Calu3 (cell line): ENCODE measurements at regions of chr16 and their contacts with region 1.

Region 1: DNA sequence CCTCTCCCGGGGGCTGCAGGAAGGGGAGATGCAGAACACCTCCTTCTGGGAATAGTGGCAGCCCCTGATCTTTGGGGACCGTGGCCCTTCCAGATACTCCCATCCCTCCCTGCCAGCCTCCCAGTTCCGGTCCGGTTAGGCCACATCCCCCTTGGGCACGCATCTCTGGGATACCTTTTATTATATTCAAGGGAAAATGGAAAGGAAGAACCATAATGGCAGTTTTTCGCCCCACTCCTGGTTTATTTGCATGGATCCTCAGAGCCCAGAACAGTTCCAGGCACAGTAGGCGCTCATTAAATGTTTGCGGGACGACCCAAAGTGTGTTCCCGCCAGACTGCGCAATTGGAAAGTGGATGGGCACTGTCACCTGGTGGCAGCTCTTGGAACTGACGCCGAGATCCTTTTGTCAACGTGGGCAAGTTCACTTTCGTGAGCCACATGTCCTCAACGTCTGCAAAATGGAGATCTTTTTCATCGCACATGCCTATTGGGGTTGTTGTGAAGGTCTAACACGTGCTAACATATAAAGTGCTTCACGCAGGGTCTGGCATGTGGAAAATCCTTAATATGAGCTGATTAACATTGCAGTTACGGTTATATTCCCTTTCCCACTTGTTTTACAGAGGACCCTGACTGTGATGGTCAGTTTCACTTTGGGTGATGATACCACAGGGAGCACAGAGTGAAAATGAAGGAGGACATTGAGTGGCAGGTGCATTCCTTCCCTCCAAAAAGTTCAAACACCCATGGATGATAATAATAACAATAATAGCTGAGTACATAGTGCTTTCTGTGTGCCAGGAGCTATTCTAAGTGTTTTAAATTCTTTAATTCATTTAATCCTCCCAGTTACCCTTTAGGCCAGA is 1.7 kb upstream of the GPRC5B start:
- DNase-seq: peak; percentile 86
- H3K4me3 Mint-ChIP-seq: peak overlapping the region; percentile 90
- H3K27ac Mint-ChIP-seq: no peak overlapping the region
- H3K4me1 Mint-ChIP-seq: peaks cover 8% of the 10 kb centered on the region
- H3K27me3 Mint-ChIP-seq: no peaks in the 10 kb centered on the region
- CTCF ChIP-seq: peak; percentile 100

Region 2: GRCh38 chr16:19555162-19555937 is 331.0 kb before region 1 on chr16 and contains the start of gene VPS35L:
- CTCF ChIA-PET with region 1: no interaction called
- intact Hi-C with region 1: loop called (anchors 1 kb)
- DNase-seq: peak; percentile 94
- H3K4me3 Mint-ChIP-seq: peak within 1 kb of the TSS; percentile 71
- H3K27ac Mint-ChIP-seq: peak within 1 kb of the TSS; percentile 66
- H3K4me1 Mint-ChIP-seq: no peaks in the 10 kb centered on the region
- H3K27me3 Mint-ChIP-seq: no peaks in the 10 kb centered on the region
- CTCF ChIP-seq: peak; percentile 51
- total RNA-seq, gene VPS35L: 14.2 and 25.4 TPM in 2 replicates

Region 3: GRCh38 chr16:19583665-19584300 is 302.5 kb before region 1 on chr16:
- CTCF ChIA-PET with region 1: interaction called, 10 read pairs
- intact Hi-C with region 1: loop called (anchors 5 kb)
- DNase-seq: peak; percentile 61
- H3K4me3 Mint-ChIP-seq: no peak overlapping the region
- H3K27ac Mint-ChIP-seq: no peak overlapping the region
- H3K4me1 Mint-ChIP-seq: peaks cover 8% of the 10 kb centered on the region
- H3K27me3 Mint-ChIP-seq: no peaks in the 10 kb centered on the region
- CTCF ChIP-seq: peak; percentile 91

Region 4: DNA sequence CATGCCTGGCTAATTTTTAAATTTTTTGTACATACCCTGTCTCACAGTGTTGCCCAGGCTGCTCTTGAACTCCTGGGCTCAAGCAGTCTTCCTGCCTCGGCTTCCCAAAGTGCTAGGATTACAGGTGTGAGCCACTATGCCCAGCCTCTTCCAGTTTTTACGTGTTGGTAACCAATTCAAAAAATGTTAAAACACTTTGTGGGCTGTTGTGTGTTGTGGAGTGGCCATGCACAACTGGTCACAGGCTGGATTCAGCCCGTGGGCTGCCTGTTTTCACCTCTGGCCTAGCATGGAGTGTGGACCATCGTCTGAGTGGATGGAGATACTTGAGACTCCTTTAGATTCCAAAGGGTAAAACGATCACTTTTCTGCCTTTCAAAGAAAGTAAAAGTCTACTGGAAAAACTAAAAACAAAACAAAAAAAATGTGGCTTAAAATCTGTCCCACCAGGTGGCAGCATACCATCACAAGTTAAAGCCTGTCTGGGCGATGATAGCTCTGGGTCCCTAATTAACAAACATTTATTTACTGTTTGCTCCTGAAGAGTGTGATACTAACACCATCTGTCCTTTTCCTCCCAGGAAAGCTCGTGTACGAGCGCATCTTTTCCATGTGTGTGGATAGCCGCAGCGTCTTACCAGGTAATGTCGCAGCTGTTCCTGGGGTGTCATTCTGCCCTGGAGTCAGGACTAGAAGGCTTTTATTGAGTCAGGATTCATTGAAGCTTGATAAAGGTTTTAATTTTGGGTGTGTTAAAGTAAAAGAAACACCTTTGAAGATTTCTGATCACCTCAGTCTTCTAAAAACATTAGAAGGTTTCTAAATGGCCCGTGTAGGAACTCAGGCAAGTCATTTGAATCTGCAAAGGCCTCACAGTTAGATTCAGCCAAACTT is 285.0 kb before region 1 on chr16:
- CTCF ChIA-PET with region 1: interaction called, 41 read pairs
- intact Hi-C with region 1: loop called (anchors 1 kb)
- DNase-seq: peak; percentile 60
- H3K4me3 Mint-ChIP-seq: no peak overlapping the region
- H3K27ac Mint-ChIP-seq: no peak overlapping the region
- H3K4me1 Mint-ChIP-seq: peaks cover 21% of the 10 kb centered on the region
- H3K27me3 Mint-ChIP-seq: no peaks in the 10 kb centered on the region
- CTCF ChIP-seq: peak; percentile 64

Region 5: GRCh38 chr16:19700319-19700781 is 186.0 kb before region 1 on chr16:
- CTCF ChIA-PET with region 1: interaction called, 6 read pairs
- intact Hi-C with region 1: loop called (anchors 5 kb)
- DNase-seq: peak; percentile 73
- H3K4me3 Mint-ChIP-seq: peak overlapping the region; percentile 30
- H3K27ac Mint-ChIP-seq: peak overlapping the region; percentile 69
- H3K4me1 Mint-ChIP-seq: peaks cover 45% of the 10 kb centered on the region
- H3K27me3 Mint-ChIP-seq: no peaks in the 10 kb centered on the region
- CTCF ChIP-seq: no peak

Region 6: DNA sequence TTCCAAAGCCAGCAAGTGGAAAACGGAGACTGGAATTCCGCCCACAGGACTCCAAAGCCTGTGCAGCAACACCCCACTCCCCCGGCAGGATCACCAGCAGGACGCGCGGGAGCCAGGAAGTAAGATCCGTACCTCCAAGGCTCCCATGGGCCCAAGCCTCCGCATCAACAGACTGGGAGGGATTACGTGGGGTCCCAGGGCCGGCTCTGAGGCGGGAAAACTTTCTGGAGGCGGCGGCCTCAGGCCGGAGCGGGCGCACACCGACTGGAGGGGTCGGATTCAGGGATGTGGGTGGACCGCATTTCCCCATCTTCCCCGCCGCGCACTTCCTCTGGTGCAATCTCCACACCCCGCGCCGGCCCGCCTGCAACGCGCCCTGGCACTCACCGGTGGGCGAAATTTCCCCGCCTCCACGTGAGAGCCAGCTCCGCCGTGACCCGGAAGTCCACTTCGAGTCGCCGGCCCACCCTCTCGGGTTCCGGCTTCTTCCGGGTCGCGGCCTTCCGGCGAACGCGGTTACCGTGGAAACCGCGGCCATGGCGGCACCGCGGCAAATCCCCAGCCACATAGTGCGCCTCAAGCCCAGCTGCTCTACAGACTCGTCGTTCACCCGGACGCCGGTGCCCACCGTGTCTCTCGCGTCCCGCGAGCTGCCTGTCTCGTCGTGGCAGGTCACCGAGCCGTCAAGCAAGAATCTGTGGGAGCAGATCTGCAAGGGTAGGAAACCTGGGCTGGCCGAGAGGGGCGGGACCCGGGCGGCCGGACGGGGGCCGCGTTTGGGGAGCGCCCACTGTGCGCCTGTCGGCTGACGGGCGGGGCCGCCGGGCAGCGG is 168.3 kb before region 1 on chr16 and contains the starts of genes IQCK and KNOP1:
- CTCF ChIA-PET with region 1: interaction called, 3 read pairs
- intact Hi-C with region 1: loop called (anchors 2 kb)
- DNase-seq: peak; percentile 93
- H3K4me3 Mint-ChIP-seq: peak within 1 kb of the TSS; percentile 94
- H3K27ac Mint-ChIP-seq: peak within 1 kb of the TSS; percentile 89
- H3K4me1 Mint-ChIP-seq: peaks cover 56% of the 10 kb centered on the region
- H3K27me3 Mint-ChIP-seq: no peaks in the 10 kb centered on the region
- CTCF ChIP-seq: no peak
- total RNA-seq, gene IQCK: 42.5 and 43.2 TPM in 2 replicates
- total RNA-seq, gene KNOP1: 84.9 and 99.0 TPM in 2 replicates

Region 7: DNA sequence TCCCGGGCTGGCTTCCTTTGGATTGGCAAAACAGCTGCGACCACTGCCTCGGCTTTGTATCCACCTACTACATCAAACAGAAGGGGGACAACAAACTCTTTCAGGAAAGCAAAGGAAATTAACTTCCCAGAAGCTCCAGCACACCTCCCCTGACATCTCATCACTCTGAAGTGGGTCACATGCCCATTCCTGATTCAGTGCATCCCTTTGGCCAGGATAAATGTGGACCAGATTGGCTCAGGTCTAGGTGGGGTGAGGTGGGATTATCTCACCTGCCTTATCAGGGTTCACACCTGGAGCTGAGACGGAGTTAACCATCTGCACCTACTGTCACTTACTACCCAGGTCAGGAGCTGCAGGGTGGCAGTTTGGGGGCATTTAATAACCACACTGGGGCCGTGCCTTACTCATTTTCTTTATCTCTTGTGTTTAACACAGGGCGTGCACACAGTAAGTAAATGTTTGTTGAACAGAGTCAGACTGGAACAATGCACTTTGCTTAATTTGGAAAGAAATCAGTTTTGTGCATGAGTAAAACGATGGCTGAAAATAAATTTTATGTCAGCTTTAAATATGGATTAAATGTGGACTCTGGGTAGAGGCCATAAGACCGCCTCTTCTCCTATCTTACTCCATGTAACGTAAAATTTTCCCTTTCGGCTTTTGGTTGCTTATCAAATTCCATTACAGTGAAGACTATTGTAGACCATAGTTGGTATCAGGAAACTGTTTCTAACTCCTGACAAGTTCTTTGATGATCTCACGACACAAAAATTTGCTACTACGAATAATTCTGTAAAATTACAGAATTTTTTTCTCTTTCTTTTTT is 132.3 kb before region 1 on chr16:
- CTCF ChIA-PET with region 1: interaction called, 4 read pairs
- intact Hi-C with region 1: loop called (anchors 2 kb)
- DNase-seq: peak; percentile 65
- H3K4me3 Mint-ChIP-seq: peak overlapping the region; percentile 27
- H3K27ac Mint-ChIP-seq: peak overlapping the region; percentile 98
- H3K4me1 Mint-ChIP-seq: peaks cover 80% of the 10 kb centered on the region
- H3K27me3 Mint-ChIP-seq: no peaks in the 10 kb centered on the region
- CTCF ChIP-seq: no peak

Region 8: DNA sequence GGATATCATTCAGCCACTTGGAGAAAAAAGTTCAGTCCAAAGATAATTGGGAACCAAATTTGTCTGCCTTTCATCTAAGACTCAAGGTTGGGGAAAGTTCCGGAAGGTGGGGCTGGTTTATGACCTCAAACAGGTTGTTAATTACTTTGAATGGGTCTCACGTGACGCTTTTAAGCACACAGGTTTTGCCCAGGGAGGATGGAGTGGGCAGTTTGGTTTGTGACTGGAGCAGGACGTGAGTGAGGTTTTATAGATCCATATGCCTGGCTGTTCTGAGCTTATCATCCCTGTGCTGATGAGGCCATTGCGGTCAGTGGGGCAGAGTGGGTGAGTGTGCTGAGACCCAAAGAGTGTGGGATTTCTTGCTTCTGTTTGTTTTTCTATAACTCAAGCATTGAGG is 37.1 kb after region 1 on chr16:
- CTCF ChIA-PET with region 1: no interaction called
- intact Hi-C with region 1: no loop called
- DNase-seq: no peak
- H3K4me3 Mint-ChIP-seq: no peak overlapping the region
- H3K27ac Mint-ChIP-seq: no peak overlapping the region
- H3K4me1 Mint-ChIP-seq: no peaks in the 10 kb centered on the region
- H3K27me3 Mint-ChIP-seq: peaks cover 30% of the 10 kb centered on the region
- CTCF ChIP-seq: no peak

Region 9: GRCh38 chr16:19948186-19949104 is 62.1 kb after region 1 on chr16:
- CTCF ChIA-PET with region 1: no interaction called
- intact Hi-C with region 1: no loop called
- DNase-seq: no peak
- H3K4me3 Mint-ChIP-seq: no peak overlapping the region
- H3K27ac Mint-ChIP-seq: no peak overlapping the region
- H3K4me1 Mint-ChIP-seq: no peaks in the 10 kb centered on the region
- H3K27me3 Mint-ChIP-seq: no peaks in the 10 kb centered on the region
- CTCF ChIP-seq: no peak